Activated CD4-positive, alpha-beta T cell treated with anti-CD3 and anti-CD28 coated beads, Interleukin-2, amount 10 ng/mL, durations not matched to agents 24 days and 14 days (primary cell): ENCODE measurements at regions of chr18 and their contacts with region 1.

Region 1: GRCh38 chr18:58541789-58542425 is 87.0 kb downstream of the ALPK2 start:
- DNase-seq: peak; percentile 82
- H3K4me3 Mint-ChIP-seq: no peak overlapping the region
- H3K27ac Mint-ChIP-seq: peak overlapping the region; percentile 71
- H3K4me1 Mint-ChIP-seq: peaks cover 66% of the 10 kb centered on the region
- H3K27me3 Mint-ChIP-seq: peaks cover 34% of the 10 kb centered on the region

Region 2: DNA sequence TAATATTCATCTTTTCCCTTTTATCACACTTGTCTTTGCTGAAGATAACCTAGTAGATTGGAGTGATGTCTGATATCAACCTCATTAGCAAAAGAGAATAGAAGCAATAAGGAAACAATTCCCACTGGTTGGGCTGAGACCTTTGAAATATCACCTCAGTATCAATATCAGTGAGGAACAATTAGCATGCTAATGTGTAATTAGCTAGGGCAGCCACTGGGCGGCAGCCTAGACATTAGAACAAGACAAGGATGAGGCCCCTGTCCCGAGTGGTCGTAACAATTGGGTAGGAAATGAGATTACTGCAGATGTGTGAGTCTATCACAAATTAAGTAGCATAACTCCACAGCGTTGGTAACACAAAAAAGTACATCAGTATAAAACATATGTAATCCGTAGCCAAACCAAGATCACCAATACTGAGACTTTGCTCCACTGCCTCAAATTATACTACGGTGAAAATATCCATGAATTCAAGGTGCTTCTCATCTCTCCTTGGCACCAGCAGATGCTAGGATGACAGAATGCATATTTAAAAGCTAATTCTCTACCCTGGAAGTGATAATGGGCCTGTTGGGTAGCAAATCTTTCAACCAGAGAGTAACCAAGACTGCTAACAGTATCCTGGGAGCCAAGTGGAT is 12.1 kb before region 1 on chr18:
- intact Hi-C with region 1: loop called (anchors 2 kb)
- DNase-seq: peak; percentile 88
- H3K4me3 Mint-ChIP-seq: no peak overlapping the region
- H3K27ac Mint-ChIP-seq: peak overlapping the region; percentile 47
- H3K4me1 Mint-ChIP-seq: peaks cover 15% of the 10 kb centered on the region
- H3K27me3 Mint-ChIP-seq: peaks cover 39% of the 10 kb centered on the region

Region 3: GRCh38 chr18:58615140-58616132 is 73.5 kb after region 1 on chr18:
- intact Hi-C with region 1: loop called (anchors 1 kb)
- DNase-seq: peak; percentile 89
- H3K4me3 Mint-ChIP-seq: peak overlapping the region; percentile 68
- H3K27ac Mint-ChIP-seq: peak overlapping the region; percentile 94
- H3K4me1 Mint-ChIP-seq: peaks cover 24% of the 10 kb centered on the region
- H3K27me3 Mint-ChIP-seq: peaks cover 21% of the 10 kb centered on the region

Region 4: GRCh38 chr18:58625839-58626238 is 83.9 kb after region 1 on chr18:
- intact Hi-C with region 1: no loop called
- DNase-seq: no peak
- H3K4me3 Mint-ChIP-seq: no peak overlapping the region
- H3K27ac Mint-ChIP-seq: no peak overlapping the region
- H3K4me1 Mint-ChIP-seq: peaks cover 22% of the 10 kb centered on the region
- H3K27me3 Mint-ChIP-seq: peaks cover 26% of the 10 kb centered on the region

Region 5: GRCh38 chr18:58671111-58671631 is 129.3 kb after region 1 on chr18 and contains the start of gene MALT1:
- intact Hi-C with region 1: loop called (anchors 2 kb)
- DNase-seq: peak; percentile 98
- H3K4me3 Mint-ChIP-seq: peak within 1 kb of the TSS; percentile 98
- H3K27ac Mint-ChIP-seq: peak within 1 kb of the TSS; percentile 92
- H3K4me1 Mint-ChIP-seq: peaks cover 61% of the 10 kb centered on the region
- H3K27me3 Mint-ChIP-seq: peaks cover 2% of the 10 kb centered on the region
- total RNA-seq, gene MALT1: 22.7 and 24.9 TPM in 2 replicates

Region 6: DNA sequence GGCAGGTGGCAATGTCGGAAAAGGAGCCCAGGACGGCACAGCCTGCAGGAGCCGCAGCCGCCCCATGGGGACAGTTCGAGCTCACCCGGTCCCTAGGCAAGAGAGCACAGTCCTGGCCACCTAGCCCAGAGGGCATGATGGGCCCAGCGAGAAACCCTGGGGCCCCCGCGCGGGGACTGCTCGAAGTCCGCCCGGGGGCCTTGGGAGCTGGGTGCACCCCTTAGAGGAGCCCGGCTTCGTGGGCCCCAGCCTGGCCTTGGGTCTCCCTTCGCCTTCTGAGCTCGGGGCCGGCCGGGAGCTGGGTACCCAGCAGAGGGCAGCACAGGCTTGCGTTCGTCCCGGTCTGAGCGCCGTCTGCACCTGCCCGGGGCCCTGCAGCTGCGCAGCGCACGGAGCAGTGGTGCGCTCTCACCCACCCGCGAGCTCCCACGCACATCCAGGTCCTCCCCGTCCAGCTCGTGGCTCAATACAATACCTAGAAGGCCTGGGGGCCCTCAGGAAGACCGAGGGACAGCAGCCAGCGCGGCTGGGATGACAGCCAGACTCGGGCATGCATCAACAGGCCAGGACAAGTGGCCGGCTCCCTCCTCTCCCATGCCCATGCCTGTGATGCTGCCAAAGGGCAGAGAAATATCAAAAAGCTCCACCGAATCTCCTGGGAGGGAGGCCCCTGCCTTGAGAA is 226.5 kb after region 1 on chr18:
- intact Hi-C with region 1: loop called (anchors 1 kb)
- DNase-seq: peak; percentile 90
- H3K4me3 Mint-ChIP-seq: peak overlapping the region; percentile 49
- H3K27ac Mint-ChIP-seq: no peak overlapping the region
- H3K4me1 Mint-ChIP-seq: peaks cover 12% of the 10 kb centered on the region
- H3K27me3 Mint-ChIP-seq: peaks cover 60% of the 10 kb centered on the region

Region 7: GRCh38 chr18:58842978-58843687 is 301.2 kb after region 1 on chr18:
- intact Hi-C with region 1: no loop called
- DNase-seq: no peak
- H3K4me3 Mint-ChIP-seq: no peak overlapping the region
- H3K27ac Mint-ChIP-seq: no peak overlapping the region
- H3K4me1 Mint-ChIP-seq: no peaks in the 10 kb centered on the region
- H3K27me3 Mint-ChIP-seq: peaks cover 46% of the 10 kb centered on the region

Region 8: GRCh38 chr18:59358712-59359575 is 817.0 kb after region 1 on chr18 and contains the start of gene LMAN1:
- intact Hi-C with region 1: loop called (anchors 10 kb)
- DNase-seq: peak; percentile 97
- H3K4me3 Mint-ChIP-seq: peak within 1 kb of the TSS; percentile 88
- H3K27ac Mint-ChIP-seq: peak within 1 kb of the TSS; percentile 90
- H3K4me1 Mint-ChIP-seq: peaks cover 34% of the 10 kb centered on the region
- H3K27me3 Mint-ChIP-seq: peaks cover 6% of the 10 kb centered on the region
- total RNA-seq, gene LMAN1: 141 and 148 TPM in 2 replicates